ENCODE measurements at regions of chr12 and their contacts with region 1.

Region 1: DNA sequence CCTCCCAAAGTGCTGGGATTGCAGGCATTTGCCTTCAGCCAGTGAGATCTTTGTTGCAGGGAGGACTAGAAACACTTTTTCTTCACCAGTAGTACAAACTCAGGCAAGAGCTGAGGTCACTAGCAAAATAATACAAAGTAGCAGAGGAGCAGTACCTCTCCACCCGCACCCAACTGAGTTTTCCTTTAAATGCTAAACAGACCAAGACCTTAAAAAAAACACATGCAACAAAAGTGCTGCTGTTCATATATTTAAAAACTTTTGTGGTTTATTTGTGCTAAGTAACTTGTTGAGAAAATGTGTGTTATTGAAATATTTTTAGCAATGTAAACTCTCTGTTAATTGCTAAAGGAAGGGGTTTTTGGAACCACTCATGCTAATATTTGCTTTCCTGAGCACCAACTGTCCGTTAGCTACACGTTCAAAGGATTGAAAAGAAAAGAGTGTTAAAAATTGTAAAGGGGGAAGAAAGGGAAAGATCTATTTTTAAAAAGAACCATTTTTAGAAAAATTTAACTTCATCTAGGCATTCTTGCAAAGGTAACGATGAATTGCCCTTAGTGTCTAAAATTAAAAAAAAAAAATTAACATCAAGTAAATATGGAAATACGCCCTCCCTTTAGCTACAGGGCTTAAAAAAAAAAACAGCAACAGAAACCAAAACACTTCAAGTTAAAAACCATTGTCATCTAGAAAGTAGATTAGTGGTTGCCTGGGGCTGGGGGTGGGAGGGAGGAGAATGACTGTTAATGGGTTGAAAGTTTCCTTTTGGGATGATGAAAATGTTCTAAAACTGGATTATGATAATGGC is 114.0 kb upstream of the KRAS start:
- DNase-seq: peak in 1 of 35 experiments; percentile 23
- ATAC-seq: peak in 1 of 4 experiments; percentile 72
- H3K4me3 ChIP-seq: no peak overlapping the region
- H3K4me3 Mint-ChIP-seq: peak overlapping the region in 2 of 3 donors; percentile 10 to 54
- H3K27ac ChIP-seq: no peak overlapping the region
- H3K27ac Mint-ChIP-seq: peak overlapping the region in 1 of 2 donors; percentile 11
- H3K4me1 ChIP-seq: peaks cover 4 to 11% of the 10 kb centered on the region in 2 experiments
- H3K4me1 Mint-ChIP-seq: peaks cover 13 to 16% (median 13%) of the 10 kb centered on the region in 3 donors
- H3K27me3 ChIP-seq: no peaks in the 10 kb centered on the region
- H3K27me3 Mint-ChIP-seq: no peaks in the 10 kb centered on the region

Region 2: GRCh38 chr12:25241167-25242020 is 123.3 kb before region 1 on chr12:
- CTCF ChIA-PET with region 1: interaction called, 10 to 11 read pairs
- POLR2A ChIA-PET with region 1: interaction called, 3 to 5 read pairs
- DNase-seq: peak in 28 of 35 experiments; percentile 16 to 75 (median 34)
- ATAC-seq: peak; percentile 75 to 91 (median 79)
- H3K4me3 ChIP-seq: no peak overlapping the region
- H3K4me3 Mint-ChIP-seq: no peak overlapping the region
- H3K27ac ChIP-seq: peak overlapping the region; percentile 60
- H3K27ac Mint-ChIP-seq: peak overlapping the region; percentile 43 to 81
- H3K4me1 ChIP-seq: peaks cover 4 to 10% of the 10 kb centered on the region in 2 experiments
- H3K4me1 Mint-ChIP-seq: peaks cover 49 to 70% (median 58%) of the 10 kb centered on the region in 3 donors
- H3K27me3 ChIP-seq: no peaks in the 10 kb centered on the region
- H3K27me3 Mint-ChIP-seq: no peaks in the 10 kb centered on the region

Region 3: DNA sequence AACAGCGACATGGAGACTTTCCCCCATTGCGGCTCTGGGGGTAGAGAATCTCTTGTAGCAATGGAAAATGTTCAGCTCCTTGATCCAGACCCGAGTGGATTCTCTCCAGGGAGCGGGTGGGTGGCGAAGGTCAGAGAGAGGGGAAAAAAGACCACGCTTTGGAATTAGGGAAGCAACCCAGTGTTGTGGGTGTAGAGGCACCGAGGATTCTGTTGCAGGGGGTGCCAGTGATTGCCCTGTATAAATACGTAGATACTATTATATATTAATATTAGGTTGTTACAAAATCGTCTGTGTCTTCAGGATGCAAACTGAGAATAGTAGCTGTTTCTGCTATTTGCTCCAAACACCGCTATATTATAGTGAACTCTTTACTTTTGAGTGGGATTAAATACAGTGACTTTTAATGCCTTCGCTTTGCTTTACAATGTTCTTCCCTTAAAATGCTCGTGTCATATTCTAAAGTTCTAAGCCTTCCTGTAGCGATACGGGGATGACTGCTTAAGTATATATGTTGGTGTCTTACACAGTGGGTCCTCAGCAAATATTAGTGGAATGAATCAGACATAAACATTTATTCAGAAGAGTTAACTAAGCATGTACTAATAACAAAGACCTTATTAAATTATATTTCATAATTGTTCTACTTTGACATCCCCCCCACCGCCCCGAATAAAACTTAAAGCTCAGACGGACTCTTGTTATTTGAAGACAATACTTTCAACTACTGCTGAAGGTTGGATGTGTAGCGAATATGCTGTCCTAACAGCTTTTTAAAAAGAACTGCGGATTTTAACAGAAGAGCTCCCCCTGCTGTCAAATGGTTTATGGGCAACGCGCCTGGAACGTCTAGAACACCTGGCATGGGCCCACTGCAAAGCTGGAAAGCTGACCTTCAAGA is 22.3 kb after region 1 on chr12:
- CTCF ChIA-PET with region 1: interaction called, 4 to 11 read pairs
- POLR2A ChIA-PET with region 1: interaction called in 1 of 2 experiments, 10 read pairs
- DNase-seq: peak; percentile 49 to 92 (median 70)
- ATAC-seq: peak in 3 of 4 experiments; percentile 7 to 10 (median 9)
- H3K4me3 ChIP-seq: peak overlapping the region; percentile 69 to 92
- H3K4me3 Mint-ChIP-seq: peak overlapping the region; percentile 94 to 98 (median 94)
- H3K27ac ChIP-seq: peak overlapping the region; percentile 98
- H3K27ac Mint-ChIP-seq: peak overlapping the region; percentile 99 to 100
- H3K4me1 ChIP-seq: peaks cover 19 to 36% of the 10 kb centered on the region in 2 experiments
- H3K4me1 Mint-ChIP-seq: peaks cover 40 to 58% (median 53%) of the 10 kb centered on the region in 3 donors
- H3K27me3 ChIP-seq: no peaks in the 10 kb centered on the region
- H3K27me3 Mint-ChIP-seq: no peaks in the 10 kb centered on the region